ENCODE measurements at regions of chr16 and their contacts with region 1.

Region 1: GRCh38 chr16:79269211-79269863 is 331.2 kb downstream of the MAF start:
- DNase-seq: peak; percentile 89
- H3K4me3 Mint-ChIP-seq: peak overlapping the region; percentile 60
- H3K27ac Mint-ChIP-seq: peak overlapping the region; percentile 98
- H3K4me1 Mint-ChIP-seq: peaks cover 91% of the 10 kb centered on the region
- H3K27me3 Mint-ChIP-seq: peaks cover 5% of the 10 kb centered on the region

Region 2: GRCh38 chr16:78720416-78720815 is 548.9 kb before region 1 on chr16:
- CTCF ChIA-PET with region 1: no interaction called
- POLR2A ChIA-PET with region 1: no interaction called
- intact Hi-C with region 1: no loop called
- DNase-seq: no peak
- H3K4me3 Mint-ChIP-seq: no peak overlapping the region
- H3K27ac Mint-ChIP-seq: no peak overlapping the region
- H3K4me1 Mint-ChIP-seq: no peaks in the 10 kb centered on the region
- H3K27me3 Mint-ChIP-seq: no peaks in the 10 kb centered on the region

Region 3: DNA sequence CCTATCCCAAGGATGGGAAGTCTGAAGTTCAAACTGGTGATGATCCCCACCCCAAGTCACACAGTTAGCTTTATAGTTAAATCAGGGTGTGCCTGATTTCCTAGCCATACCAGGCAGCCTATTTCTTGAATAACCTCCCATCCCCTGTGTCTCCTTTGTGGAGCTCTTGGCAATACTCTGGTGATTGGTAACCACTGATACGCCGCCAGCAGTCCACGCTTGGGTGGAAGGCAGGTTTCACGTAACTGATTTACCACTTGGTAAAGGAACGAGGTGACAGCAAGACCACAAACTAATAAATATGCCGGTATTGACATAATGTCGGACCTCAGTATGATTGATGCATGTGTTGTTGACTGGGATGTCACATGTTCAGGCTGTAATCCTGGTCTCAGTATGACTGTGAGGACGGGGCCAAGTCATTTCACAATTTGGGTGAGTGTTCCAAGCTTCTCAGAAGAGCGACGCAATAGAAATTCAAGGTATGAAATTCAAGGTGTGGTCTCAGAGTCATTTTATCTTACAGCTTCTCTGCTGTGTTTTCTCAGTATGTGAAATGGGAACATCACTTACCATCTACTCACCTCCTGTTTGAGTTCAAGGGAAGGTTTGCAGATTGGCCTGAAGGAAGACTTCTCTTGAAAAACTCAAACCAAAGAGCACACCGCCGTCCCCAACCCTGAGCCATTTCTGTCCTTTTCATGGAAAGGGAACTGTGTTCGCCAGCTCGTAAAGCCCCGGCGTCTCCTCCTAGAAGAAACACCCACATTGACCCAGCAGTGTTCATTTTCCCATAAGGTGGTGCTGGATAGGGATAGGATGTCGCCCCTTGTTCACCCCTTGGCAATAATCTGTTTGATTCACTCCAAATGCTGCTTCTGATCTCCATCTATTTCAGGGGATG is 491.0 kb before region 1 on chr16:
- CTCF ChIA-PET with region 1: interaction called, 3 read pairs
- POLR2A ChIA-PET with region 1: interaction called, 14 read pairs
- intact Hi-C with region 1: loop called (anchors 1 kb)
- DNase-seq: peak; percentile 90
- H3K4me3 Mint-ChIP-seq: peak overlapping the region; percentile 62
- H3K27ac Mint-ChIP-seq: peak overlapping the region; percentile 96
- H3K4me1 Mint-ChIP-seq: peaks cover 94% of the 10 kb centered on the region
- H3K27me3 Mint-ChIP-seq: no peaks in the 10 kb centered on the region

Region 4: GRCh38 chr16:78816499-78817195 is 452.7 kb before region 1 on chr16:
- CTCF ChIA-PET with region 1: no interaction called
- POLR2A ChIA-PET with region 1: no interaction called
- intact Hi-C with region 1: no loop called
- DNase-seq: no peak
- H3K4me3 Mint-ChIP-seq: no peak overlapping the region
- H3K27ac Mint-ChIP-seq: peak overlapping the region; percentile 67
- H3K4me1 Mint-ChIP-seq: peaks cover 15% of the 10 kb centered on the region
- H3K27me3 Mint-ChIP-seq: no peaks in the 10 kb centered on the region

Region 5: DNA sequence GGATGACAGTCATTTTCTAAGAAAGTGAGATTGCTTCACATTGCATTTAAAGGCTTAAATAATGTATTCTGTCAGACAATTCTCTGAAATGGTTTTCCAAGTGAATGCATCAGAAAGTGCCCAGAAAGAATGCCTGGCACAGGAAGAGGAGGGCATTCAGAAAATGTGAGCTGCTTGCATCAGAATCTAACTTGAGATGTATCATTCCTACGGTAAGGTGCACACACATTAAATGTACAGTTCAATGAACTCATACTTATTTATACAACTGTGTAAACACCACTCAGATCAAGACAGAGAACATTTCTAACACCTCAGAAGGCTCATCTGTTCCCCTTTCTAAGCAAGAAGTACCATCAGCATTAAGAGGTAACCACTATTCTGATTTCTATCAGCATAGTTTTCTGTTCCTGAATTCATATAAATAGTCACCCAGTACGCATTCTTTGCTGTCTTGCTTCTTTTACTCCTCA is 306.8 kb before region 1 on chr16:
- CTCF ChIA-PET with region 1: no interaction called
- POLR2A ChIA-PET with region 1: interaction called, 7 read pairs
- intact Hi-C with region 1: loop called (anchors 1 kb)
- DNase-seq: peak; percentile 52
- H3K4me3 Mint-ChIP-seq: peak overlapping the region; percentile 3
- H3K27ac Mint-ChIP-seq: peak overlapping the region; percentile 92
- H3K4me1 Mint-ChIP-seq: peaks cover 59% of the 10 kb centered on the region
- H3K27me3 Mint-ChIP-seq: no peaks in the 10 kb centered on the region

Region 6: DNA sequence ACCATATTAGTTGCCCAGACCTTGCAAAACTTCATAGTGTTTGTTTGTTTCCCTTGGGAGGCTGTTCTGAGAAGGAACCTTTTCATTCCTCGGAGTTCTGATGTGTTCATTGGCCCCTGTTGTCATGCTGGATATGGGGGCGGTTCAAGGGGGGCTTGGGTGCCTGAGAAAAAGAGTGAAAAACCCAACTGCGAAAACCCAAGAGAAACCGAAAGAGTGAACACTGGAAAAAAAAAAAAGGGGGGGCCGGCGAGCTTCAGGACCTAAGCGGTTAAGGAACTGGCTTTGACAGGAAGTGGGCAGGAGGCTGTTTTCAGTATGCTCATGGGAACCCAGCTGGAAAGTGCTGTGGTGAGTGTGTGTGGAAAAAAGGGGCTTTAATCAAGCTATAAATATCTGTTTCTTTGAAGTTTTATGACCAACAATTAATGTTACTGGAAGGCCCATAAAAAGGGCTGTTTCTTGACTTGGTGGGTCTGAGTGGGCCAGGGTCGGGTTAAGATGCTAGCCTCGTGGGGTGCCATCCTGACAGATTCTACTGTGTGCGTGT is 179.5 kb before region 1 on chr16:
- CTCF ChIA-PET with region 1: interaction called, 6 read pairs
- POLR2A ChIA-PET with region 1: interaction called, 23 read pairs
- intact Hi-C with region 1: loop called (anchors 1 kb)
- DNase-seq: peak; percentile 85
- H3K4me3 Mint-ChIP-seq: peak overlapping the region; percentile 45
- H3K27ac Mint-ChIP-seq: peak overlapping the region; percentile 86
- H3K4me1 Mint-ChIP-seq: peaks cover 59% of the 10 kb centered on the region
- H3K27me3 Mint-ChIP-seq: no peaks in the 10 kb centered on the region

Region 7: GRCh38 chr16:79286646-79287423 is 17.5 kb after region 1 on chr16:
- CTCF ChIA-PET with region 1: interaction called, 6 read pairs
- POLR2A ChIA-PET with region 1: interaction called, 68 read pairs
- intact Hi-C with region 1: loop called (anchors 1 kb)
- DNase-seq: peak; percentile 69
- H3K4me3 Mint-ChIP-seq: peak overlapping the region; percentile 55
- H3K27ac Mint-ChIP-seq: peak overlapping the region; percentile 73
- H3K4me1 Mint-ChIP-seq: peaks cover 61% of the 10 kb centered on the region
- H3K27me3 Mint-ChIP-seq: no peaks in the 10 kb centered on the region

Region 8: DNA sequence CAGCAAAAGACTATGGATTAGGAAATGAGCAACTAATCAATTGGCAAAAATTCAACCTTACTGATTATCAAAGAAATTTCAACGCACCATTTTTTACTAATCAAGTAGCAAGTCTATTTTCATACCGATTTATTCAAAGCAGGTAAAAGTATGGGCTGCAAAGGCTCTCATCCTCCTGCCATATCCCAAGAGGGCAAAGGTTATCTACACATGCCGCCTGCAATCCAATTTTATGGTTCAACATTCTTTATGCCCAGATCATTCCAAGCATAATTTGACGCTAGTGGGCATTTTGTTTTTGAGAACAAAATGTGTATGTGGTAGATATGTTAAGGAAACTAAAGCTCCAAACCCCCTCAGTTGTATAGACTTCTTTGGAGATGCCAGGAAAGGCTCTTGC is 60.6 kb after region 1 on chr16:
- CTCF ChIA-PET with region 1: no interaction called
- POLR2A ChIA-PET with region 1: no interaction called
- intact Hi-C with region 1: no loop called
- DNase-seq: no peak
- H3K4me3 Mint-ChIP-seq: no peak overlapping the region
- H3K27ac Mint-ChIP-seq: no peak overlapping the region
- H3K4me1 Mint-ChIP-seq: peaks cover 16% of the 10 kb centered on the region
- H3K27me3 Mint-ChIP-seq: peaks cover 4% of the 10 kb centered on the region

Measured in activated CD4-positive, alpha-beta memory T cell treated with anti-CD3 and anti-CD28 coated beads for 36 hours (primary cell).